Activated naive CD4-positive, alpha-beta T cell treated with anti-CD3 and anti-CD28 coated beads for 36 hours (primary cell): ENCODE measurements at regions of chr6 and their contacts with region 1.

Region 1: DNA sequence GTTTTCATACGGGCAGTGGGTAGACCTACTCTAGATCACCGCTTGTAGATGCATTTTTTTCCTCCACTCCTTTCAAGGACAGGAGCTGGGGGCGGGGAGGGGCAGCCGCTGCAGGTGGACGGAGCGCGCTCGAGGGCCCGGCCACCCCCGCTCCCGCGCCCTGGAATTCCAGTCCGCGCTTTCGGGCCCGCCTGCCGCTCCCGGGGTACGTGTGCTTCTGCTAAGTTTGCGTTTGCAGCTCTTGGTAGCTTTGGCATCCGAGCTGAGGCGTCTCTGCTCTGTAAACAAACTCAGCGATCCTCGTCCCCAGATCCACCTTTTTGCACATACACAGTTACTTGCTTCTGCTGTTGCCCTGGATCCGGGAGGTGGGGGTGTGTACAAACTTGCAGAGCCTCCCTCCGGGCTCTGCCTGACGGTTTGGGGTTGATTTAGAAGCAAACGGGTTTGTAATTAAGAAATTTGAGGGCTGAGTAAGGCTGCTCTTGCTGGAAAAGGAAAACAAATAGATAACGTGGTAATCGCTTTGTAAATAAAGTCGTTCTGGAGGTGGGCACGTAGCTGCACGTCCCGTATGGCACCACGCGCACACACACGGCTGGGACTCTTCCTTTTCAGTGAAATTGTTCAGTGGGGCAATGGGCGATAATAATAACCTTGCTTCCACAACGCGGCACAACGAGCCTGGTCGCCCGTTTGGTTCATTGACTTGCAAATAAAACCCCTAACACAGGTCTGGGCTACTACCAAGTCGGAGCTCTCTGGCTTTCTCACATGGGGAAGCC is 976 bp upstream of the CITED2 start:
- DNase-seq: peak; percentile 80
- H3K4me3 Mint-ChIP-seq: peak overlapping the region; percentile 96
- H3K27ac Mint-ChIP-seq: peak overlapping the region; percentile 93
- H3K4me1 Mint-ChIP-seq: peaks cover 31% of the 10 kb centered on the region
- H3K27me3 Mint-ChIP-seq: no peaks in the 10 kb centered on the region

Region 2: DNA sequence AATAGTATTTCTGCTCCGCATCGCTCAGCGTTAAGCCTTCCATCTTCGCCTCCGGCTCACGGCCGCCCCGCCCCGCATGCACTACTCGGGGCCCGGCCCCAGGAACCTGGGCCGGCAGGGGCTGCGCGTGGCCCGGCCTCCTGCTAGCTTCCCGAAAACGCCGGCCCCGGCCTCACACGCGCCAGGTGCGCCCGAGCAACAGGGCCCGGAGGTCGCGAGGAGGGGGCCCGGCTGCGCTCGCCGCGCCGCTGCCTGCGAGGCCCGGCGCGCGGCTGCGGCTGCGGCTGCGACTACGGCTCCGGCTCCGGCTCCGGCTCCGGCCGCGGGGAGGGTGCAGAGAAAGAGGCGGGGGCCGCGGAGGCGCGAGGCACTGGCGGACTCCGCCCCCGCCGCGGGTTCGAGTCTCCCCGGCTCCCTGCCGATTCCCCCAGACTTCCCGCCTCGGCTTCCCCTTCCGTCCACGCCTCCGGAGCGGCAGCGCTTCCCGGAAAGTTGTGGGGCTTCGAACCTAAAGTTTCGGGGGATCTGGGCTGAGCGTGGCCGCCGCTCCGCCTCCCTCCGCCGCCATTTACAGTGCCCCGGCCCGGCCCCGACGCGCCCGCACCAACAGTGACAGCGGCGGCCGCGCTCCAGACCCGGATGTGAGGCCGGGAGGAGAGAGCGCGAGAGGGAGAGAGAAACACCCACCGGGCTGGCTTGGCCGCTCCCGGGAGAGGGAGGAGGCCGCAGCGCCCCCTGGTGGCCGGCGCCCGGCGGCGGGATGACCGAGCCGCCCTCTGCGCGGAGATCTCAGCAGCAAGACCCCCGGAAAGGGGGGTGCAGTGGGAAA is 387.6 kb before region 1 on chr6 and contains the start of gene REPS1:
- CTCF ChIA-PET with region 1: interaction called, 7 read pairs
- intact Hi-C with region 1: loop called (anchors 2 kb)
- DNase-seq: peak; percentile 92
- H3K4me3 Mint-ChIP-seq: peak within 1 kb of the TSS; percentile 86
- H3K27ac Mint-ChIP-seq: peak within 1 kb of the TSS; percentile 89
- H3K4me1 Mint-ChIP-seq: peaks cover 4% of the 10 kb centered on the region
- H3K27me3 Mint-ChIP-seq: no peaks in the 10 kb centered on the region
- total RNA-seq, gene REPS1: 25.8 to 28.8 TPM

Region 3: GRCh38 chr6:139323511-139324300 is 51.7 kb before region 1 on chr6:
- CTCF ChIA-PET with region 1: no interaction called
- intact Hi-C with region 1: no loop called
- DNase-seq: peak; percentile 88
- H3K4me3 Mint-ChIP-seq: peak overlapping the region; percentile 77
- H3K27ac Mint-ChIP-seq: peak overlapping the region; percentile 97
- H3K4me1 Mint-ChIP-seq: peaks cover 31% of the 10 kb centered on the region
- H3K27me3 Mint-ChIP-seq: no peaks in the 10 kb centered on the region

Region 4: DNA sequence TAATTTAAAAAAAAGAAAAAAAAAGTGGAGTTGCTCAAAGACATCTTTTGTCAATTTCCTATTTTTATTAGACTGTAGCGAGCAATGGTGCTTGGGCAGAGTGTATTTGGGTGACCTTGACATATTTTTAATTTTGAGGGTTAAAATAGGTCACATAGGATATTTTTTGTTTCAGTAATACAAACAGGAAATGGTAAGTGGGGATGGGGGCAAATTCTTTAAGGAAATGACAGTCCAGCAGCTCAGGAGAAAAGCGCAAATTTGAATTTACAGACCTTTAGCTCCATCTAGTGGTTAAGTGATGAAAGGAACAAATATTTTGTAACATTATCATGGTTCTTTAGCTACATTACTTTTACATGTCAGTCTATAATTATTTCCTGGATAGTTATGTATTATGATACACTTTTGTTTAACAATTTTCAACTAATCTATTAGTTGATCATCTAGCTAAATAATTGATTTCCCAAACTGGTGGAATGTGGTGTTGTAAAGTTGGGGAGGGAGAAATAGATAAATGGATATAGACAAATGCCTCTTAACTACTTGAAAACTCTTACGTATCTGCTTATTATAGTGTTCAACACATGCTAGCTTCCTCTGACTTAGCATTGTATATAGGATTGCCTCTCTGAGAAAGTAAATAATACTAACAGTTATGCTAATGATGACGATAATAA is 11.0 kb before region 1 on chr6:
- CTCF ChIA-PET with region 1: interaction called, 14 read pairs
- intact Hi-C with region 1: no loop called
- DNase-seq: no peak
- H3K4me3 Mint-ChIP-seq: no peak overlapping the region
- H3K27ac Mint-ChIP-seq: no peak overlapping the region
- H3K4me1 Mint-ChIP-seq: peaks cover 26% of the 10 kb centered on the region
- H3K27me3 Mint-ChIP-seq: no peaks in the 10 kb centered on the region

Region 5: DNA sequence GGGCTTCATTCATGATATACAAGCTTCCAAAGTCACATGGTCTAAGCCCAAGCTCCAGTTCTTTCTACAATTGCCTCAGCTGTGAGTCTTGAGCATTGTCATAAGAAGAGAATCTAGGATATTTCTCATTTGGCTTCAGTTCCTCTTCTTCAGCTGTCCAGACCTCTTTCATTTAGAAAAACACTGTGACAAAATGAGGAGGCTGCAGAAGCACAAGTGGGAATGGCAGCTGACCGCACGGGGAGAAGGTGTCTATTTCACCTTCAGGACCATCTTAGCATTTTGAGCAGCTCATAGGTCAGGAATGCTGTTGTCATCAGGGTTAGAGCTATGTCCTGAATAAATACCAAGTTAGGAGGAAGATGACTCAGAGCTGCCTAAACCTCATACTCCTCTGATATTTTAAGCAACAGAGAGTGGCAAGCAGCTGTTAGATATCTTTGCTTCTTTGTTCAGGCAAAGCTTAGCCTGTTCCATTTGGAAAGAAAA is 389.1 kb after region 1 on chr6:
- CTCF ChIA-PET with region 1: interaction called, 3 read pairs
- intact Hi-C with region 1: loop called (anchors 5 kb)
- DNase-seq: no peak
- H3K4me3 Mint-ChIP-seq: no peak overlapping the region
- H3K27ac Mint-ChIP-seq: no peak overlapping the region
- H3K4me1 Mint-ChIP-seq: peaks cover 9% of the 10 kb centered on the region
- H3K27me3 Mint-ChIP-seq: no peaks in the 10 kb centered on the region

Region 6: DNA sequence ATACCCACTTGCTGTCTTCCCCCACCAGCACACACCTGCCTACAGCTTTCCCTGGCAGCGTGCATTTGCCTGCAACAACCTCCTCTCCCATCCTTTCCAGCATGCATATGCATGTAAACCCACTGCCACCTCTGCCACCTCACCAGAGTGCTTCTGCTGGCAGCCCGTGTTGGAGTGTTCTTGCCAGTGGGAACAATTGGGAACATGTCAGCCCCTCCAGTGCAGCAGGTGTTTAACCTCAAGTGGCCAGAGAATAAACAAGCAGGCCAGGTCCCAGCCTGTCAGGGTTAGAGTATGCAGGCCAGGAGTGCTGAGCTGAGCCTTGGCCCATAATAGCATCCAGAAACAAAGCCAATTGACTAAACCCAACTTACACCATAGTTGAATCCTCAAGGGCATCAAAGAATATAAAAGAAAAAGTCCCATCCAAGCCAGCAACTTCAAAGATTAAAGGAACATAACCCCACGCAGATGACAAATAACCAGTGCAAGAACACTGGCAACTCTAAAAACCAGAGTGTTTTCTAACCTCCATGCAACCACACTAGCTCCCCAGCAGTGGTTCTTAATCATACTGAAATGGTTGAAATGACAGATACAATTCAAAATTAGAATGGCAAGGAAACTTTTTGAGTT is 1211.1 kb after region 1 on chr6:
- CTCF ChIA-PET with region 1: no interaction called
- intact Hi-C with region 1: loop called (anchors 5 kb)
- DNase-seq: peak; percentile 24
- H3K4me3 Mint-ChIP-seq: no peak overlapping the region
- H3K27ac Mint-ChIP-seq: no peak overlapping the region
- H3K4me1 Mint-ChIP-seq: peaks cover 7% of the 10 kb centered on the region
- H3K27me3 Mint-ChIP-seq: peaks cover 5% of the 10 kb centered on the region